ENCODE measurements at regions of chr1 and their contacts with region 1.

Region 1: DNA sequence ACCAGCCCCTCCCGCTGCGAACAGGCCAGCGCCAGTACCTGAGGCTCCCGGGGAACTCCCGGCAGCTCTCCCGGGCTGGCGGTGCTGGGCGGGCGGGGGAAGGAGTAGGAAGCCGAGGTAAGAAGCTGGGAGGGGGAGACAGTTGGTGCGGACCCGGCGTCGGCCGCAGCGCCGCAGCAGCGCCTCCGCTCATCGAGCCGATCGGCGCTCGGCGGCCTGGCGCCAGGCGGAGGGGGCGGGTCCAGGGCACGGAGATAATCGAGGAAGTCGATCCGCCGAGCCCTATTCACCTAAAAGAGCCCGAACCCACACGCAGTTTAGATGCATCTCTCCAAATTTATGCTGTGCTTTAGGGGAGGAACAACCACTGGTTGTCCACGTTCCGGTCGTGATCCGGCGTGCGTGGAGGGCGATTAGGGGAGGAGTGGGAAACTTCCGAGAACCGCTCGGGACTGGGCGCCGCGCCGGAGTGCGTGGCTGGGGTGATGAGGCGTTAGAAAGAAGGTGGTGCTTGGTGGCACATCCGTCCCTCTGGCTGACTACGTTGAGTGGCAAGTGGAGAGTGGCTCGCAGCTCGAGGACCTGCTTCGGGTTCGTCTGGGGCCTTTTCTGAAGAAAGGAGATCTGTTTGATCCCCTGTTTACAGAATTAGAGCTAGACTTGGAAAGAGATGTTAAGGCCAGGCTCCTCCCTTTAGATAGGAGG is at the start of gene VAMP4:
- DNase-seq: peak; percentile 90
- H3K4me3 Mint-ChIP-seq: peak within 1 kb of the TSS; percentile 96
- H3K27ac Mint-ChIP-seq: peak within 1 kb of the TSS; percentile 99
- H3K4me1 Mint-ChIP-seq: peaks cover 40% of the 10 kb centered on the region
- H3K27me3 Mint-ChIP-seq: no peaks in the 10 kb centered on the region
- total RNA-seq, gene VAMP4: 10.5 to 10.9 TPM

Region 2: GRCh38 chr1:170531758-170532657 is 1210.0 kb before region 1 on chr1 and contains the start of gene GORAB:
- CTCF ChIA-PET with region 1: no interaction called
- intact Hi-C with region 1: loop called (anchors 5 kb)
- DNase-seq: peak; percentile 93
- H3K4me3 Mint-ChIP-seq: no peak within 1 kb of the TSS
- H3K27ac Mint-ChIP-seq: no peak within 1 kb of the TSS
- H3K4me1 Mint-ChIP-seq: peaks cover 13% of the 10 kb centered on the region
- H3K27me3 Mint-ChIP-seq: no peaks in the 10 kb centered on the region
- total RNA-seq, gene GORAB: 9.5 TPM

Region 3: DNA sequence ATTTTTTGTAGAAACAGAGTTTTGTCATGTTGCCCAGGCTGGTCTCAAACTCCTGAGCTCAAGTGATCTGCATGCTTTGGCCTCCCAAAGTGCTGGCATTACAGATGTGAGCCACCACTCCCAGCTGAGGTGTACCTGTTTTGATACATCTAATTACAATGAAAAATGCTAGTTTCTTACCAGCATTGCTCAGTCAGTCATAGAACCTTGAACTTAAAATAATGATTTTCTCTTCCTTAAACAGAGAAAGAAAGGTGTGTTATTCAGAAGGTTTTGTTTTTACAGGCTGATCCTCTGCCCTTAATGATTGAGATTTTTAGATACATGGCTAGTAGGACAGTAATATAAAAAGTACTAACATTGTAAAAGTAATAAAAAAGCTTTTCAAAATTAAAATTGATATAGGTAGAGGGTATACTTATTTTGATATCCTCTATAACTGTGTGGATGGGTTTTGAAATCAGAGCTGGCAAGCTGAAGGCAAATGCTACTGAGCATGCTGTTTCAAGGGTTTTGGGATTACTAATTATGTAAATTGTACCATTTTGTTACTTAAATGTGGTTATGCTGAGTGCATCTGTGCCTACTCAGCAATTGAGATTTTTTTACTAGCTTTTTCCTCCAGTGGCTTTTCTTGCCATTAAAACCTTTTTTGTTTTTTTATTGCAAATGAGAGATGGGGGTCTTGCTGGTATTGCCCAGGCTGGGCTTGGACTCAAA is 240.6 kb before region 1 on chr1:
- CTCF ChIA-PET with region 1: no interaction called
- intact Hi-C with region 1: loop called (anchors 5 kb)
- DNase-seq: no peak
- H3K4me3 Mint-ChIP-seq: no peak overlapping the region
- H3K27ac Mint-ChIP-seq: peak overlapping the region; percentile 71
- H3K4me1 Mint-ChIP-seq: peaks cover 87% of the 10 kb centered on the region
- H3K27me3 Mint-ChIP-seq: no peaks in the 10 kb centered on the region

Region 4: DNA sequence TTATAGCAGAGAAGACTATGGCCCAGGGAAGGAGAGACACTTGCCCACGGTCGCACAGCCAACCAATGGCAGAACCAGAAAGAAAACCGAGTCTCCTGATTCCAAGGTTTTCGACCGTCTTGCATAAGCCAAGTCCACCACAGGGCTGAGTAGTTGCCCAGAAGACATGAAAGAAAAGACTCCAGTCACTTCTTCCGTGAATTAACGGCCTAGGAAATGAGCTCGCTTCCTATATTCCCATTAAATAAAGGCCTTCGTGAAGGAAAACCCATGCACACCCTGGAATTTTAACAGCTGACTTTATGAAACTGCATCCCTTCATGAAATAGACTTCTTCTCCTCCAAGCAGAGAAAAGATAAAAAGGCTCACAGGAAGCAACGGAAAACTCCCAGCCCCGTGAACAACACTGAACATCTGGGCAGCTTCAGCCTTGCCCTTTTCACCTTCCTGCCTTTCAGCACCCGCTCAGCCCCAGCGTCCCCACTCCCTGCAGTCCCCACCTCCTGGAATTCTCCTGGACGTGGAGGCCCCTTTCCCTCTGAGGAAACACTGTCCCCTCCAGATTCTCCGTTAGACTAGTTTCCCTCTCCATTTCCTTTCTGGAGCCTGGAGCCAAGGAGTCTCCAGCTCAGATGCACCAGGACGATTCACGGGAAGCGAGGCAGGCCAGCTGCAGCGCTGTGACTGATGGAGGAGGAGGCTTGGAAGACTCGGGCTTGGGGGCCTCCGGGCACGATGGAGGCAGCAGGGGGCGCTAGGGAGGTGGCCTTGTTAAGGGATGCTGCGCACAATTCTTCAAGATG is 86.9 kb before region 1 on chr1:
- CTCF ChIA-PET with region 1: interaction called, 8 read pairs
- intact Hi-C with region 1: loop called (anchors 1 kb)
- DNase-seq: peak; percentile 92
- H3K4me3 Mint-ChIP-seq: peak overlapping the region; percentile 39
- H3K27ac Mint-ChIP-seq: no peak overlapping the region
- H3K4me1 Mint-ChIP-seq: peaks cover 11% of the 10 kb centered on the region
- H3K27me3 Mint-ChIP-seq: peaks cover 5% of the 10 kb centered on the region

Region 5: DNA sequence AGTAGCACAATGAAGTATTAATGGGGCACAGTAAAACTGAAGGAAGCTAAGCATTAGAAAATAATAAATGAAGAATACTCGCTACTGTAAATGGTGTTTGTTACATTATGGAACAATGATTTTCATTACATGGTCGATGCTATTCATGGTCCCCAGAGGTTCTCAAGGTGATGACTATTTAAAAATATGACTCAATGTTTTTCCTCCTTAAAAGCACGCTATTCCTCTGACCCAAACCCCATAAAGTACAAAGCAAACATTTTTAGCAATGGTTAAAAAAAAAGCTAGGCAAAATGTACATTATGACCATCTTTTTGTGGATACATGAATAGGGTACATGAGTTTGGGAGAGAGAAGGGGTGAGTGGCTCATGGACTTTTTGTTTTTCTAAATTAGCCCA is 34.4 kb before region 1 on chr1:
- CTCF ChIA-PET with region 1: no interaction called
- intact Hi-C with region 1: no loop called
- DNase-seq: no peak
- H3K4me3 Mint-ChIP-seq: no peak overlapping the region
- H3K27ac Mint-ChIP-seq: no peak overlapping the region
- H3K4me1 Mint-ChIP-seq: no peaks in the 10 kb centered on the region
- H3K27me3 Mint-ChIP-seq: no peaks in the 10 kb centered on the region

Region 6: GRCh38 chr1:171794085-171794484 is 52.1 kb after region 1 on chr1:
- CTCF ChIA-PET with region 1: no interaction called
- intact Hi-C with region 1: loop called (anchors 1 kb)
- DNase-seq: peak; percentile 78
- H3K4me3 Mint-ChIP-seq: no peak overlapping the region
- H3K27ac Mint-ChIP-seq: peak overlapping the region; percentile 89
- H3K4me1 Mint-ChIP-seq: peaks cover 23% of the 10 kb centered on the region
- H3K27me3 Mint-ChIP-seq: no peaks in the 10 kb centered on the region

Region 7: GRCh38 chr1:171858696-171859095 is 116.7 kb after region 1 on chr1:
- CTCF ChIA-PET with region 1: no interaction called
- intact Hi-C with region 1: no loop called
- DNase-seq: no peak
- H3K4me3 Mint-ChIP-seq: no peak overlapping the region
- H3K27ac Mint-ChIP-seq: no peak overlapping the region
- H3K4me1 Mint-ChIP-seq: no peaks in the 10 kb centered on the region
- H3K27me3 Mint-ChIP-seq: peaks cover 5% of the 10 kb centered on the region

Region 8: DNA sequence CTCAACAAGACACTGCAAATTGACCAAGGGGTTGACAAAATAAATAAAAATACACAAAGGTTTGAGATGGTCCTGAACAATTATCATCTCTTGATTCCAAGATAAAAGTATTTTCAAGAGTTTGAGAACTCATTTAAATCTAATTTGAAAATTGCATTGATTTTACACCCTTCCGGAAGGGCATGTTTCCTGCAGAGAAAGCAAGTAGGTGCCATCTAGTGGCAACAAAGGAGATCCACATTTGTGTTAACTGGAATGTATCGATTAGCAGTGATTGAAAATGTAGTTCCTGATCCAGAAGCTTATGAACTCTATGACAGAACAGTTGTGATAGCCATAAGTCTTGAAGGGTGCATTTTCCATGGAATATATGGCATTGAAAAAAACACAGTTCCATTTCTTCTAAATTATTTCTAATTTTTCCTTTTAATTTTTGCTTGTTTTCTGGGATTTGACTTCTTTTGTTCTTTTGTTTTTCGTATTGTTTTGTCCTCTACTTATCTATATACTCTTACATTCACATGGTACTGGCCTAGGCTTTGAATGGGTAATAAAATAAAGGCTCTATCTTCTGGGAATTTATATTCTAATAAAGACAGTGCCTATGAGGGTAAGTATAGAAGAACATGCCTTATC is 242.9 kb after region 1 on chr1:
- CTCF ChIA-PET with region 1: interaction called, 5 read pairs
- intact Hi-C with region 1: loop called (anchors 5 kb)
- DNase-seq: no peak
- H3K4me3 Mint-ChIP-seq: no peak overlapping the region
- H3K27ac Mint-ChIP-seq: no peak overlapping the region
- H3K4me1 Mint-ChIP-seq: no peaks in the 10 kb centered on the region
- H3K27me3 Mint-ChIP-seq: no peaks in the 10 kb centered on the region